Activated naive CD4-positive, alpha-beta T cell treated with anti-CD3 and anti-CD28 coated beads for 36 hours (primary cell): ENCODE measurements at regions of chr4 and their contacts with region 1.

Region 1: DNA sequence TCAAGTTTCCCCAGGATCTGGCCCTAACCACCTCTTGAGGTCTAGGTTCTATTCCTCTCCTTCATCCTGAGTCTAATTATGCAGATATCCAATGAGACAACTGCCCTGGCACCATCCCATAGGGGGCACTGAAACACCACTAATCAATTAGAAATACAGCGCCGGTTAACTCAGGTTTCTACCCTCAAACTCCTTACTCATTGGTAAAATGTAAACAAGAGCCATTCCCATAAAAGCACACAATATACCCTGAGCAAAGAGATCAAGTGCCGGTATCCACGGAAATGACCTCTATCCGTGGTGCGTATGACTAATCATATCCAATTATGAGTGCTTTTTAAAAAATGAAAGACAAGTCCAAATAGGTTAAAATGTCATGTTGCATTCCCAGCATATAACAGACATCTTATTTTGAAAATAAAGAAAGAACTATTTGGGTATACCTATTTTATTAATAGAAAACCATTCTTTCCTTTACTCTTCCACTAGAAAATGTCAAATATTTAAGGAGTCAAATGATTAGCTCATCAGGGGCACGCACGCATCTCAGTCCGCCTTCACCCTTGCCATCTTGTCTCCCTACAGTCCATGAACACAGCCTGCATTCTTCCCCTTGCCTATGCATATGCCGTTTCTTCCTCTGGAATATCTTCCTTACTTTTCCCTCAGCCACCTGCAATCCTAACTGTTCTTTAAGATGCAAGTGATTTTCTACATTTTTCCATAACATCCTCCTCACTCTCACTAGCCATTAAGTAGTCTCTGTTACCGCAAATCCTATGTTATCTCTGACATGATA is 141.1 kb downstream of the MAML3 start:
- DNase-seq: peak; percentile 69
- H3K4me3 Mint-ChIP-seq: no peak overlapping the region
- H3K27ac Mint-ChIP-seq: no peak overlapping the region
- H3K4me1 Mint-ChIP-seq: peaks cover 8% of the 10 kb centered on the region
- H3K27me3 Mint-ChIP-seq: peaks cover 1% of the 10 kb centered on the region

Region 2: GRCh38 chr4:140252742-140253555 is 240.1 kb after region 1 on chr4:
- CTCF ChIA-PET with region 1: interaction called, 53 read pairs
- intact Hi-C with region 1: loop called (anchors 1 kb)
- DNase-seq: peak; percentile 65
- H3K4me3 Mint-ChIP-seq: peak overlapping the region; percentile 5
- H3K27ac Mint-ChIP-seq: no peak overlapping the region
- H3K4me1 Mint-ChIP-seq: peaks cover 11% of the 10 kb centered on the region
- H3K27me3 Mint-ChIP-seq: peaks cover 6% of the 10 kb centered on the region

Region 3: GRCh38 chr4:140326395-140326993 is 313.6 kb after region 1 on chr4:
- CTCF ChIA-PET with region 1: interaction called, 3 read pairs
- intact Hi-C with region 1: loop called (anchors 1 kb)
- DNase-seq: peak; percentile 32
- H3K4me3 Mint-ChIP-seq: no peak overlapping the region
- H3K27ac Mint-ChIP-seq: no peak overlapping the region
- H3K4me1 Mint-ChIP-seq: no peaks in the 10 kb centered on the region
- H3K27me3 Mint-ChIP-seq: no peaks in the 10 kb centered on the region

Region 4: GRCh38 chr4:140609548-140610425 is 596.9 kb after region 1 on chr4:
- CTCF ChIA-PET with region 1: no interaction called
- intact Hi-C with region 1: loop called (anchors 1 kb)
- DNase-seq: no peak
- H3K4me3 Mint-ChIP-seq: no peak overlapping the region
- H3K27ac Mint-ChIP-seq: no peak overlapping the region
- H3K4me1 Mint-ChIP-seq: peaks cover 1% of the 10 kb centered on the region
- H3K27me3 Mint-ChIP-seq: peaks cover 6% of the 10 kb centered on the region

Region 5: GRCh38 chr4:140851032-140851636 is 838.2 kb after region 1 on chr4:
- CTCF ChIA-PET with region 1: no interaction called
- intact Hi-C with region 1: loop called (anchors 1 kb)
- DNase-seq: peak; percentile 54
- H3K4me3 Mint-ChIP-seq: no peak overlapping the region
- H3K27ac Mint-ChIP-seq: no peak overlapping the region
- H3K4me1 Mint-ChIP-seq: no peaks in the 10 kb centered on the region
- H3K27me3 Mint-ChIP-seq: peaks cover 21% of the 10 kb centered on the region